Ascending aorta (tissue), 2 donors: ENCODE measurements at regions of chr12 and their contacts with region 1.

Region 1: GRCh38 chr12:63843721-63844390 is 644 bp upstream of the SRGAP1 start:
- DNase-seq: peak; percentile 63 to 94
- H3K4me3 ChIP-seq: peak overlapping the region; percentile 80 to 96
- H3K27ac ChIP-seq: peak overlapping the region; percentile 96 to 98
- H3K4me1 ChIP-seq: peaks cover 0 to 4% of the 10 kb centered on the region in 2 donors
- H3K27me3 ChIP-seq: no peaks in the 10 kb centered on the region
- CTCF ChIP-seq: peak; percentile 84 to 95 (median 89)

Region 2: GRCh38 chr12:62466594-62467491 is 1377.0 kb before region 1 on chr12 and contains the start of gene MON2:
- intact Hi-C with region 1: loop called (anchors 10 kb)
- DNase-seq: peak; percentile 44 to 94
- H3K4me3 ChIP-seq: peak within 1 kb of the TSS; percentile 92 to 95
- H3K27ac ChIP-seq: peak within 1 kb of the TSS; percentile 92 to 95
- H3K4me1 ChIP-seq: peaks cover 0 to 18% of the 10 kb centered on the region in 2 donors
- H3K27me3 ChIP-seq: no peaks in the 10 kb centered on the region
- CTCF ChIP-seq: no peak
- total RNA-seq, gene MON2: 14.4 TPM

Region 3: GRCh38 chr12:63779498-63780481 is 64.1 kb before region 1 on chr12 and contains the start of gene RXYLT1:
- intact Hi-C with region 1: loop called (anchors 1 kb)
- DNase-seq: peak; percentile 16 to 89
- H3K4me3 ChIP-seq: peak within 1 kb of the TSS; percentile 73 to 84
- H3K27ac ChIP-seq: peak within 1 kb of the TSS; percentile 86
- H3K4me1 ChIP-seq: peaks cover 0 to 7% of the 10 kb centered on the region in 2 donors
- H3K27me3 ChIP-seq: no peaks in the 10 kb centered on the region
- CTCF ChIP-seq: no peak
- total RNA-seq, gene RXYLT1: 1.5 TPM

Region 4: GRCh38 chr12:63802012-63802608 is 41.7 kb before region 1 on chr12:
- intact Hi-C with region 1: no loop called
- DNase-seq: no peak
- H3K4me3 ChIP-seq: no peak overlapping the region
- H3K27ac ChIP-seq: no peak overlapping the region
- H3K4me1 ChIP-seq: no peaks in the 10 kb centered on the region
- H3K27me3 ChIP-seq: no peaks in the 10 kb centered on the region
- CTCF ChIP-seq: peak; percentile 12 to 58 (median 46)

Region 5: DNA sequence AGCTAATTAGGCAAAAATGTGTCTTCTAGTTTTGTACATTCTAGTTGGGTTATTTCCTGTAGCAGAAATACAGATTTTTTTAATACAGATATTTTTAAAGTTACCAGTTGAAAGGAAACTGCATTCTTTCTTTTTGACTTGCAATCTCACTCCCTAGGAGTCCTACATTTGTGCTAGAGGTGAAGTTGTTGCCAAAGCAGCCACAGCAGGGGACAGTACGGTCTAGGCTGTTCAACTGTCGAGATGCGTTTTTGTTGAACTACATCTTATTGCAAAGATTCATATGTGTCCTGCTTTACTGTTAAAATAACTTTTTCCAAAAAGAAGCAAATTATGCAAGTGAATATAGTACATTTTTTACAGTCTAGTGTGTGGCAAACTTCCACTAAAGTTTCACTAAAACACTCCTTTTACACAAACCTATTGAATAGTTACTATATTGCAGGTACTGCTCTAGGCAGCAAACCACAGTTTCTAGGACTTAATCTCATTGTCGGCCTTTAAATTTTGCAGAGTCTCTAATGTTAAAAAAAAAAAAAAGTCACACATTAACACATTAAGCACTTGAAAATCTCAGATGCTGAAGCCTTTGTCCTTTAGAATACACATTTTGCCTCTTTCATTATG is 29.6 kb before region 1 on chr12:
- intact Hi-C with region 1: no loop called
- DNase-seq: no peak
- H3K4me3 ChIP-seq: no peak overlapping the region
- H3K27ac ChIP-seq: no peak overlapping the region
- H3K4me1 ChIP-seq: no peaks in the 10 kb centered on the region
- H3K27me3 ChIP-seq: no peaks in the 10 kb centered on the region
- CTCF ChIP-seq: no peak

Region 6: GRCh38 chr12:64088431-64089349 is 244.8 kb after region 1 on chr12:
- intact Hi-C with region 1: loop called (anchors 5 kb)
- DNase-seq: peak; percentile 9 to 80
- H3K4me3 ChIP-seq: peak overlapping the region in 1 of 2 donors; percentile 29
- H3K27ac ChIP-seq: peak overlapping the region; percentile 26 to 36
- H3K4me1 ChIP-seq: peaks cover 5 to 15% of the 10 kb centered on the region in 2 donors
- H3K27me3 ChIP-seq: no peaks in the 10 kb centered on the region
- CTCF ChIP-seq: no peak

Region 7: GRCh38 chr12:64181504-64182291 is 337.8 kb after region 1 on chr12:
- intact Hi-C with region 1: loop called (anchors 1 kb)
- DNase-seq: peak in 1 of 2 donors; percentile 83
- H3K4me3 ChIP-seq: peak overlapping the region in 1 of 2 donors; percentile 48
- H3K27ac ChIP-seq: peak overlapping the region; percentile 73 to 84
- H3K4me1 ChIP-seq: peaks cover 0 to 9% of the 10 kb centered on the region in 2 donors
- H3K27me3 ChIP-seq: no peaks in the 10 kb centered on the region
- CTCF ChIP-seq: peak; percentile 22 to 58 (median 35)

Region 8: GRCh38 chr12:64256166-64256800 is 412.4 kb after region 1 on chr12:
- intact Hi-C with region 1: loop called (anchors 1 kb)
- DNase-seq: no peak
- H3K4me3 ChIP-seq: no peak overlapping the region
- H3K27ac ChIP-seq: no peak overlapping the region
- H3K4me1 ChIP-seq: peaks cover 0 to 9% of the 10 kb centered on the region in 2 donors
- H3K27me3 ChIP-seq: no peaks in the 10 kb centered on the region
- CTCF ChIP-seq: peak; percentile 44 to 74 (median 59)

Region 9: GRCh38 chr12:64403707-64404469 is 560.0 kb after region 1 on chr12 and contains the start of gene XPOT:
- intact Hi-C with region 1: loop called (anchors 2 kb)
- DNase-seq: peak; percentile 85 to 97
- H3K4me3 ChIP-seq: peak within 1 kb of the TSS; percentile 76 to 98
- H3K27ac ChIP-seq: peak within 1 kb of the TSS; percentile 97 to 98
- H3K4me1 ChIP-seq: peaks cover 0 to 10% of the 10 kb centered on the region in 2 donors
- H3K27me3 ChIP-seq: no peaks in the 10 kb centered on the region
- CTCF ChIP-seq: no peak
- total RNA-seq, gene XPOT: 24.5 TPM